ENCODE measurements at regions of chr11 and their contacts with region 1.

Region 1: DNA sequence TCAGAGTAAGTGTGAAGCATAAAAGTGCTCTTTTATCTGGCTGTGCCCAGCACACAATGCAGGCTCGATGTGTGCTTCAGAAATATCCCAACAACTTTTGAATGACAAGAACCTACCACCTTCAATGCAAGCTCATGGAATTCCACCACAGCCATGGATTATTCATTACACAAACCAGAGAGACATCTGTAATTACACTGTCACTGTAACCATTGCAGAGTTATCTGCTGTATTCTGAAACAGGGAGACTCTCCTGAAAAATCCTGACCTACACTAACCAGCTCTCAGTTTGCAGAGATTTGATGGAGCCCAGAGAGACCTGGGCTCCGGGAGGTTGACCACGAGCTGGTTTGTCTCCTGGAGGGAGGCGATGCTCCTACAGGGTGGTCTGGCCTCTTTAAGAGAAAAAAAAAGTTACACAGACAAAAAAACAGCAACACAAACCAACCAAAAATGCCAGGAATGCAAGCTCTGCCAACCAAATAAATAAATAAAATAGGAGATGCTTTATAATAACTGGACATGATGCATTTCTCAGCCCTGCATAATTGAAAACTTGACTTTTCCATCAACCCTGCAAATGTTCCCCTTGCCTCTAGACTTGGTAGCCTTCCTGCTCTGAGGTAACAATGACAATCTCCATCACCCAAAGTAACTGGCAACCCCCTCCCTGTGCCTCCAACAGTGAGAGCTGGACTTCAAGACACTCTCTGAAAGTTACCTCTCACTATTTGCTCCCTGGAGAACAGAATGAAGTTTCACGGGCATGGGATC is 69.7 kb downstream of the ETS1 start:
- DNase-seq: no peak
- ATAC-seq: no peak
- H3K4me3 ChIP-seq: peak overlapping the region; percentile 93
- H3K27ac ChIP-seq: peak overlapping the region; percentile 73
- H3K4me1 ChIP-seq: no peaks in the 10 kb centered on the region
- H3K27me3 ChIP-seq: no peaks in the 10 kb centered on the region

Region 2: DNA sequence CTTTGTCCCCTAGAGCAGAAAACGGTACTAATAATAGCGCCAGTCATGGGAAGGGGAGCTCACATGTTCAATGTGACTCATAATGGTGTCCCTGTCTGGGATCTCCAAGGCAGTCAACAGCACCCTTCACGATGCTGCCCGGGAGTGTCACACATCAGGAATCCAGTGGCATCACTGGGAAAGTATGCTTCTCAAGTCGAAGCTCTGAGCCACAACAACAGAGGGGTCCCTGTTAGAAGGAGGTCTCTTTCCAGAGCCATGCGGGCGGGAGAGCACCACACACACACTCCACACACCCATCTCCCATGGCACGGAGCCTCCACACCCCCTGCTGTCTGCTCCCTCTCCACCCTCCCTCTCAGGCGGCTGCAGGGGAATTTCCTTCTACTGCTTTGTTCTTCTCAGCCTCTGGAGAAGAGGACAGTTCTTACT is 50.0 kb before region 1 on chr11:
- intact Hi-C with region 1: loop called in 2 of 4 experiments (anchors 10 kb)
- DNase-seq: peak; percentile 50 to 65 (median 63)
- ATAC-seq: peak; percentile 32 to 48
- H3K4me3 ChIP-seq: no peak overlapping the region
- H3K27ac ChIP-seq: peak overlapping the region; percentile 79
- H3K4me1 ChIP-seq: peaks cover 36% of the 10 kb centered on the region
- H3K27me3 ChIP-seq: no peaks in the 10 kb centered on the region